H1 (cell line): ENCODE measurements at regions of chr18 and their contacts with region 1.

Region 1: DNA sequence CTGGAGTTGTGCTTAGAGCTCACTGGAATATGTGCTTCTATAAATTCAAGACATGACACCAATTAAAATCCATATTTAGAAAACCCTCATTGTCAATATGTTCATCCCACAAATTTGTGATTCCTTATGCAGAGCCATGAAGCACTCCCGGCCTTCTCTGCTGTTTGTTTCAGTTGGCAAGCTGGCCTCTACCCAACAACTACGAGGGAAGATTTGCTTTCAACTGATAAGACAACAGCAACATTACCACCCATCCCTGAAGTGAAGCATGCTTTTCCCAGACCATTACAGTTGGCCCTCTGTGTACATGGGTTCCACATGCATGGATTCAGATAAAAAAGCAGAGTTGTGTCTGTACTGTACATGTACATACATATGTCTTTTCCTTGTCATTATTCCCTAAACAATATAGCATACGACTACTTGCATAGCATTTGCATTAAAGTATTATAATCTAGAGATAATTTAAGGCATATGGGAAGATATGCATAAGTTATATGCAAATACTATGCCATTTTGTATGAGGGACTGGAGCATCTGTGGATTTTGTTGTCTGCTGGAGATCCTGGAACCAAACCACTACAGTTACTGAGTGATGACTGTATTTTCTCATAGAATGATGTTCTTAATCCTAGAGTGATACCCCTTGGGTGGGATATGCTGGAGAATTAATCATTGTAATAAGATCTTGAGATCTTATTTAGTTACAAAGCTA is 77.6 kb upstream of the MC2R start:
- DNase-seq: no peak
- H3K4me3 ChIP-seq: no peak overlapping the region
- H3K27ac ChIP-seq: no peak overlapping the region
- H3K4me1 ChIP-seq: peaks cover 0 to 5% (median 1%) of the 10 kb centered on the region in 4 experiments; a peak in 2 of 7 replicates
- H3K27me3 ChIP-seq: no peaks in the 10 kb centered on the region
- CTCF ChIP-seq: no peak
- EP300 ChIP-seq: no peak
- POLR2A ChIP-seq: no peak
- RAD21 ChIP-seq: no peak

Region 2: DNA sequence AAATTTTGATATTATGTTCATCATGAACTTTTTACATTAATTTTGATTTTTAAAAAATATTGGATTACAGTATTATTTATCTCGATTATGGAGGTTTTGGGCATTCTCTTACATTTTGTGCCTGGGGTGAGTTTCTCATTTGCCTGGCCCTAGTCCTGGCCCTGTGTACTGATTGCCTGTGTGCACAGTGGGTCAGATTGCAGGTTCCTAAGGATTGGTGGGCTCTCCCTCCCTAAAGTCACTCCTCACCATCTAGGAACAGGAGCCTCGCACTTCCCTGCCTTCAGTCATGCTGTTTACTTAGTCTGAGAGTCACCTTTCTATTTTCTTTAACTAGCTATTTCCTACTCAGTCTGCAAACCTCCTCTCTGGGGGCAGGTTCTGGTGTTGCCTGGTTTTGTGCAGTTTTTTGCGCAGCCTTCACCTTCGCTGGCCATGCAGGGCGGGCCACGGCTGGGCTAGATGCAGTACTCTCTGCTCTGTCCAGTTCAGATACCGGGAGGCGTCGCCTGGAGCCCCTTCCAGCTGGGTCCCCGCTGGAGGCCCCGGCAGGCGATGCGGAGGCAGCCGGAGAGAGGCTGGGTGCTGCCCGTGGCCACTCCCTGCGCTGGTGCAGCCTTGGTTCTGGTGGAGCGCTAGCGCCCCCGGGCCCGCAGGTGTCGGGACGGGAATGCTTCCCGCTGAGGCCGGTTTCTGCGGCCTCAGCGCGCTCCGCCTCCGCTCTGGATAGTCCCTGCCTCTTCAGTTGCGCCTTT is 192.3 kb before region 1 on chr18:
- CTCF ChIA-PET with region 1: no interaction called
- POLR2A ChIA-PET with region 1: no interaction called
- DNase-seq: peak; percentile 50 to 75
- H3K4me3 ChIP-seq: peak overlapping the region; percentile 24 to 56 (median 48); a peak in 7 of 8 replicates
- H3K27ac ChIP-seq: no peak overlapping the region
- H3K4me1 ChIP-seq: peaks cover 2 to 11% (median 11%) of the 10 kb centered on the region in 4 experiments
- H3K27me3 ChIP-seq: peaks cover 0 to 13% (median 5%) of the 10 kb centered on the region in 4 experiments; a peak in 2 of 7 replicates
- CTCF ChIP-seq: peak; percentile 43 to 49 (median 47); a peak in 3 of 4 replicates
- EP300 ChIP-seq: no peak
- POLR2A ChIP-seq: no peak
- RAD21 ChIP-seq: peak; percentile 61 to 72

Region 3: DNA sequence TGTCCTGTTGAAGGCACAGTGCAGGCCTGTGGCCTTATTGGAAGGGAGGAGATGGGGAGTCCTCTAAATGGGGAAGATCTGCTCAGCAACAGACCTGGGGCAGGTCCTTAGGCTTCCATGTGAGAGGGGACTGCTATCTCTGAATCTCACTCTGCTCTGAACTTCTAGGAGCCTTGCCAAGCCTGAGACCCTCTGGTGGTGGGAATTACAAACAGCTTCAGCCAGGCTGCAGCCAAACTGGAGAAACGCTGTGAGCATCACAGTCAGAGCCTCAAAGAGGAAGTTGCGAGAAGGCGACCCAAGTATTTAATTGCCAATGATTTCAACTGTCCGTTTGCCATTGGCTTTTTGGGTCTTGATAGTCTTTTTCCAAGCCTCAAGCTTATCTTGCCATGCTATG is 10.8 kb before region 1 on chr18:
- CTCF ChIA-PET with region 1: interaction called, 10 read pairs
- POLR2A ChIA-PET with region 1: no interaction called
- DNase-seq: peak in 1 of 2 experiments; percentile 58
- H3K4me3 ChIP-seq: no peak overlapping the region
- H3K27ac ChIP-seq: no peak overlapping the region
- H3K4me1 ChIP-seq: no peaks in the 10 kb centered on the region; a peak in 1 of 7 replicates
- H3K27me3 ChIP-seq: no peaks in the 10 kb centered on the region
- CTCF ChIP-seq: peak; percentile 61 to 81 (median 63)
- EP300 ChIP-seq: no peak
- POLR2A ChIP-seq: no peak
- RAD21 ChIP-seq: peak; percentile 63 to 71

Region 4: DNA sequence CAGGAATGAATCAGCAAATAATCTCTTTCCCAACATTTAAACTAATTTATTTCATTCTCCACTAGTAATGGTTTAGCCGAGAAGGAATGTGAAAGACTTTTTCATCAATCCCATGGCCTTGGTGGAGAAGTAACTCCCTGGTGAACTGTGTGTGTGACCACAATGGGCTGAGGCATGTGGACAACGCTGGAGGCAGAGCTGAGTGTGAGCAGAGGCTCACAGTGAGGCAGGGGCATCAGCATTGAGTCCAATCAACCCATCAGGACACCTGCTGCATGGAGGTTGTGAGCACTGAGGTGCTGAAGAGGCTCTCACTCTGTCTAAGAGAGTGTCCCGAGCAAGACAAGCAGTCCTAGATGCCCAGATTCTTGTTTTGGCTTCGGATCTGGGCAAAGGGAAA is 60.7 kb after region 1 on chr18:
- CTCF ChIA-PET with region 1: no interaction called
- POLR2A ChIA-PET with region 1: no interaction called
- DNase-seq: no peak
- H3K4me3 ChIP-seq: no peak overlapping the region
- H3K27ac ChIP-seq: no peak overlapping the region
- H3K4me1 ChIP-seq: no peaks in the 10 kb centered on the region
- H3K27me3 ChIP-seq: no peaks in the 10 kb centered on the region
- CTCF ChIP-seq: no peak
- EP300 ChIP-seq: no peak
- POLR2A ChIP-seq: no peak
- RAD21 ChIP-seq: no peak